MCF 10A (cell line): ENCODE measurements at regions of chr20 and their contacts with region 1.

Region 1: DNA sequence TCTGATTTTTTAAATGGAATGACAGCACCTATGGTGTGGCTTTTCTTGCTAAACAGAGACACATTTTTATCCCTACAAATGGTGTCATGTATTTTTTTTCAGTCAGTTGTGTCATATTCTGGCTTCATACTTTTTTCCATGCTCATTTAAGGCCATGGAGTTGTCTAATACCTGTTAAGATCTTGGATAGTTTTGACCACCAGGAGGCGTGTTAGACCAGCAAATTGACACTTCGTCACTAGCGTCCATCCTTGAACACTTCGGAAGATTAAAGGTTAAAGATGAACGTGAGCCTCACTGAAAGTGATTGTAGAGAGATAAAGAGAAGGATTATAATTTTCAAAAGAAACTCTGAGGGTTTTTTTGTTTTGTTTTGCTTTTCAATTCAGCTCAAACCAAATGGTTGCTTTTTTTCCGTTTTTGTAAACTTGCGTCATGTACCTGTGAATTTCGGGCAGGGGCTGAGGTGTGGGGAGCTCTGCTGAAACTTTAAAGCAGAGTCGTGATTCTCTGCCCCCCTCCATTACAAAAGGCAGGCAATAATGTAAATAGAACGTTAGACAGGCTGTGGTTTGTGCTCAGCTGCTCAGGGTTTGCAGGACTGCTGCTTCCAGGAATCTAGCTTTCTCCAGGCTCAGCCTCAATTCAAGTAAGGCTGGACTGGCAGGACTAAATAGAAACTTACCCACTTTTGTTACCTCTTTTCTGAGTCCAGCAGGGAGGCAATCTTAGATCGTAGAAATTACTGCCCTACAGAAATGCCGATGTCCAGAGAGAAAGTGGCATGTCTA is 245.1 kb downstream of the FOXA2 start:
- DNase-seq: peak; percentile 84
- H3K4me3 Mint-ChIP-seq: no peak overlapping the region
- H3K27ac Mint-ChIP-seq: no peak overlapping the region
- H3K4me1 Mint-ChIP-seq: peaks cover 36% of the 10 kb centered on the region
- H3K27me3 Mint-ChIP-seq: no peaks in the 10 kb centered on the region
- CTCF ChIP-seq: peak; percentile 76

Region 2: DNA sequence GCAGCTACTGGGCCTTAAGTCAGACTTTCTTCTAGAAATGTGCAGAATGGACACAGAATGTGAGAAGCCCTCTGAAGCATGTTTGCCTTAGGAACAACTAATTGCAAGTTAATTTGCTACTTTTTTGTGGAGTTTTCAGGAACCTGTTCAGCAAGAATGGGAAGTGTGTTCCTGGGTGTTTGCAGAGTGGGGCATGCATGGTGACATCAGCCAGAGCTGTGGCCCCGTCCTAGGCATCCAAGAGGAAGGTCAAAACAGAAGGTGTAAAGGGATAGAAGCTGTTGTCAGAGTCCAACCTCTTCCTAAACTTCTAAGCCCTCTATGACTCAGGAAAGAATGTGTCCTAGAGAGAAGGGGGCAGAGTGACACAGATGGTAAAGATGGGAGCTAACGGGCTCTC is 43.2 kb before region 1 on chr20:
- CTCF ChIA-PET with region 1: no interaction called
- POLR2A ChIA-PET with region 1: no interaction called
- intact Hi-C with region 1: no loop called
- DNase-seq: no peak
- H3K4me3 Mint-ChIP-seq: no peak overlapping the region
- H3K27ac Mint-ChIP-seq: no peak overlapping the region
- H3K4me1 Mint-ChIP-seq: peaks cover 6% of the 10 kb centered on the region
- H3K27me3 Mint-ChIP-seq: no peaks in the 10 kb centered on the region
- CTCF ChIP-seq: no peak

Region 3: DNA sequence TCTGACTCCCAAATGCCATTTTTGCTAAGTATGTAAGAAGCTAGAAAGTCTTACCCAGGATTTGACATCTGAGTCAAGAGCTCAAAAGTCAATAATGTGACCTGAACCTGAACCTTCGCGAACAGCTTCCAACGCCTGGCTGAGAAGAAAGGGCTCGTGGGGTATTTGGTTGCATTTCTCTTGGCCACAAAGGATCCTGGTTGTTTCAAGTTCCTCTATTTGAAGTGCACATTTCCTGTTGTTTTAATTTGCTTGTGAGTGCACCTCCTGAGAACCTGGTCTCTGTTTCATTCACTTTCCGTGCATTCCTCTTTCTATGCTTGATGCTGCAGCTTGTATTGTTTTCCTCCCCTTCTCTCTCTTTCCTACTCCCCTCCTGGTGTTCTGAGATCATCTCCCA is 32.6 kb after region 1 on chr20:
- CTCF ChIA-PET with region 1: interaction called, 38 read pairs
- POLR2A ChIA-PET with region 1: interaction called, 14 read pairs
- intact Hi-C with region 1: loop called (anchors 2 kb)
- DNase-seq: no peak
- H3K4me3 Mint-ChIP-seq: no peak overlapping the region
- H3K27ac Mint-ChIP-seq: no peak overlapping the region
- H3K4me1 Mint-ChIP-seq: peaks cover 37% of the 10 kb centered on the region
- H3K27me3 Mint-ChIP-seq: no peaks in the 10 kb centered on the region
- CTCF ChIP-seq: no peak

Region 4: DNA sequence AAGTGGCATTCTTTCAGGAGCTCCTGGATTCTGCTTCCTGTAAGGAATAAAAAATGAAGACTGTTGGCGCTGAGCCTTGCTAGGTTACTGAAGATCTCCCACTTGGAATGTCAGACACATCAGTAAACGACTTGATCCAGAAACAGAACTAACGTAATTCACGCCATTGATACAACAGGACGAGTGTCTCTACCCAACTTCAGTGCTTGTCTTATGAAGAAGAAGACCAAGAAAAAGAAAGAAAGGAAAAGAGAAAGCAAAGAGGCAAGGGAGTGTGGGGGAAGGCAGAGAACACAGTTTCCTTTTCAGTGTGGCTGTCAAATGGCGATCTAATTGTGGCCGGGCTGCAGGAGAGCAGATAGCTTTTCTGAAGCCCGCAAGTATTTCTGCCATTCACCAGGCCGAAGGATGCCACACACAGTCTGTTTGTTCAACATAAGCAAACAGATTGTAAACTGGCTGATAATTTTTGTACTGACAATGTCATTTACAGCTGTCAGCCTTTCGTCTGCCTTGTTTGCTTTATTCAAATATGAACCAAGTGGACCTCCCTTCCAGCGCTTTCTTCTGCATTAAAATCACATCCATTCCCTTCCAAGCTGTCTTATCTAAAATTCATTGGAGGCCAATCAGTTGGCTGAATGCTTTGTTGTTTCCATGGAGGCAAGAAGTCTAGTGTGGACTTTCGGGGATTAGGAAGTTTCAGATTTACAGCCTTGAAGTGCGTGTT is 64.5 kb after region 1 on chr20:
- CTCF ChIA-PET with region 1: interaction called, 29 read pairs
- POLR2A ChIA-PET with region 1: interaction called, 3 read pairs
- intact Hi-C with region 1: no loop called
- DNase-seq: no peak
- H3K4me3 Mint-ChIP-seq: peak overlapping the region; percentile 20
- H3K27ac Mint-ChIP-seq: peak overlapping the region; percentile 5
- H3K4me1 Mint-ChIP-seq: peaks cover 26% of the 10 kb centered on the region
- H3K27me3 Mint-ChIP-seq: no peaks in the 10 kb centered on the region
- CTCF ChIP-seq: no peak

Region 5: GRCh38 chr20:22546344-22546743 is 207.1 kb after region 1 on chr20:
- CTCF ChIA-PET with region 1: no interaction called
- POLR2A ChIA-PET with region 1: no interaction called
- intact Hi-C with region 1: no loop called
- DNase-seq: no peak
- H3K4me3 Mint-ChIP-seq: no peak overlapping the region
- H3K27ac Mint-ChIP-seq: no peak overlapping the region
- H3K4me1 Mint-ChIP-seq: no peaks in the 10 kb centered on the region
- H3K27me3 Mint-ChIP-seq: peaks cover 11% of the 10 kb centered on the region
- CTCF ChIP-seq: no peak

Region 6: DNA sequence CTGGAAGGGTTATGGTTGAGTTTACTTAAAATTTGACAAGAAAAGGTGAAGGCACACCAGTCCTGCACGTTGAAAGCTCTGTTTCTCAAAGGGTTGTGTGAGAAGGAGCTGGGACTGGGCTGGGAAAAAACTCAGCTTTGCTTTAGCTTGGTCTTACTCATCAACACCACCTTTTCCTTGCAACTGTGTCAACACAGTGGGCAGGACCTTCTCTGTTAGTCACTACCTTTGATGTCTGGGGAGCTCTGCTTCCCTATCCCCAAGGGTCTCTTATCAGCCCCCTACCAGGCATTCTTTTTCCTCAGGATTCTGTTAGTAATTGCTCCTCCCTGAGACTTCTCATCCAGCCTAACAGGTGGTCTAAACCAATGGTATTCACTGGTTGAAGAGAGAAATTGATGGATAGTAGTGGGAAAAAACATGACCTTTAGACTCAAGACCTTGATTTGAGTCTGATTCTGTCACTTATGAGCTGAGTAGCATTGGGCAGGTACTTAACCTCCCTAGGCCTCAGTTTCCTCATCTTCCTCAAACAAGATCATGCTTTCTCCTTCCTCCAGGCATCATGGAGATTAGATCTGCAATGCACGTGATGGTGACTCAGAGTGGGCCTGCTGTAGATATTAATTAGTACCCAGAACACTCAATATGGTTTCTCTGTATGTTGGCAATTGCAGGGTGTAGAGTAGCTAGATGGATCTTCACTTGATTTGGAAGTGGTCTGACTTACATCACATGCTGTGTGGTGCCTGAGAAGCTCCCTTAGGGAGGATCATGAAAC is 262.3 kb after region 1 on chr20:
- CTCF ChIA-PET with region 1: interaction called, 11 read pairs
- POLR2A ChIA-PET with region 1: no interaction called
- intact Hi-C with region 1: no loop called
- DNase-seq: peak; percentile 9
- H3K4me3 Mint-ChIP-seq: no peak overlapping the region
- H3K27ac Mint-ChIP-seq: no peak overlapping the region
- H3K4me1 Mint-ChIP-seq: no peaks in the 10 kb centered on the region
- H3K27me3 Mint-ChIP-seq: no peaks in the 10 kb centered on the region
- CTCF ChIP-seq: no peak

Region 7: GRCh38 chr20:22700367-22700766 is 361.1 kb after region 1 on chr20:
- CTCF ChIA-PET with region 1: interaction called, 549 read pairs
- POLR2A ChIA-PET with region 1: no interaction called
- intact Hi-C with region 1: no loop called
- DNase-seq: peak; percentile 57
- H3K4me3 Mint-ChIP-seq: no peak overlapping the region
- H3K27ac Mint-ChIP-seq: no peak overlapping the region
- H3K4me1 Mint-ChIP-seq: peaks cover 20% of the 10 kb centered on the region
- H3K27me3 Mint-ChIP-seq: no peaks in the 10 kb centered on the region
- CTCF ChIP-seq: no peak